Right cardiac atrium (tissue), 5 donors: ENCODE measurements at regions of chr3 and their contacts with region 1.

Region 1: DNA sequence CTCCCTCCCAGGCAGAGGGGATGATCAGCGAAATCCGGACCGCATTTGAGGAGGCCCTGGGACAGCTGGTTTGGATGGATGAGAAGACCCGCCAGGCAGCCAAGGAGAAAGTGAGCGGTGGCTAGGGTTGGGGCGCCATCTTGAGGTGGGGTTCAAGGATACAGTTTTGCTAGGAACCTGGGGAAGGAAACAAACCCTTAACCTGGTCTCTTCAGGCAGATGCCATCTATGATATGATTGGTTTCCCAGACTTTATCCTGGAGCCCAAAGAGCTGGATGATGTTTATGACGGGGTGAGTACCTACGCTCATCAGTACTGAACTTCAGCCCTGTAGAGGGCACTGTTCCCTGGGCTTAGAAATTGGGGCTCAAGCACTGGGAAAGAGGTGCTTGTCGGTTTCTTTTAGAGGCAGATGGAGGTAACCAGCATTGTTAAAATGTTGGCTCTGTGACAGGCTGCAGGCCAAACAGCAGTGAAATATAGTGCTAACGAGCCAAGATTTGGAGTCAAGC is 9.6 kb upstream of the PSMD2 start:
- DNase-seq: peak in 1 of 3 donors; percentile 39
- ATAC-seq: no peak
- H3K4me3 ChIP-seq: no peak overlapping the region
- H3K27ac ChIP-seq: no peak overlapping the region
- H3K4me1 ChIP-seq: no peaks in the 10 kb centered on the region
- H3K27me3 ChIP-seq: no peaks in the 10 kb centered on the region

Region 2: DNA sequence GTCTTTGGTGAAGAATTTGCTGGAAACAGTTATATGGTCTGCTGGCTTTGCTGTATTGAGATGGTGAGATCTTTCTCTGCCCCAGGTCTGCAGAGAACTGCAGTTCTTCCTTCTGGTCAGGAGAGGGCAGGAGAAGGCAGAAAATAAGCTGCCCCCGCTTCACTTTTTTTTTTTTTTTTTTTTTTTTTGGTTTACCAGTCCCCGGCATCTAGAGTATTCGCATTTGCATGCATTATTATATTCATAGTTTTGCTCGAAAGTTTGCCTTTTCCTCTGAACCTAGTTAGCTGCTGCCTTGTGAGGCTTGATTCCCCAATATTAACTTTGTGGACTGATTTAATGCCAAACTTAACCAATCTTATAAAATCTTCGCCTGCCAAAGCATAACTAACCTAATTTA is 394.2 kb before region 1 on chr3:
- intact Hi-C with region 1: loop called in 2 of 4 experiments (anchors 10 kb)
- DNase-seq: no peak
- ATAC-seq: peak; percentile 66 to 69
- H3K4me3 ChIP-seq: no peak overlapping the region
- H3K27ac ChIP-seq: no peak overlapping the region
- H3K4me1 ChIP-seq: no peaks in the 10 kb centered on the region
- H3K27me3 ChIP-seq: no peaks in the 10 kb centered on the region

Region 3: GRCh38 chr3:184171562-184172287 is 117.8 kb before region 1 on chr3:
- intact Hi-C with region 1: no loop called
- DNase-seq: no peak
- ATAC-seq: no peak
- H3K4me3 ChIP-seq: no peak overlapping the region
- H3K27ac ChIP-seq: no peak overlapping the region
- H3K4me1 ChIP-seq: peaks cover 3% of the 10 kb centered on the region
- H3K27me3 ChIP-seq: no peaks in the 10 kb centered on the region

Region 4: GRCh38 chr3:184250167-184250828 is 39.2 kb before region 1 on chr3:
- intact Hi-C with region 1: no loop called
- DNase-seq: peak; percentile 82 to 94 (median 91)
- ATAC-seq: peak; percentile 84 to 88
- H3K4me3 ChIP-seq: peak overlapping the region; percentile 49
- H3K27ac ChIP-seq: peak overlapping the region; percentile 40
- H3K4me1 ChIP-seq: no peaks in the 10 kb centered on the region
- H3K27me3 ChIP-seq: no peaks in the 10 kb centered on the region